Caco-2 (cell line): ENCODE measurements at regions of chr11 and their contacts with region 1.

Region 1: GRCh38 chr11:64846998-64847666 is 2.7 kb upstream of the CDC42BPG start:
- DNase-seq: peak; percentile 96 to 98
- H3K4me3 ChIP-seq: no peak overlapping the region
- H3K4me3 Mint-ChIP-seq: no peak overlapping the region
- H3K27ac Mint-ChIP-seq: no peak overlapping the region
- H3K4me1 ChIP-seq: peaks cover 34% of the 10 kb centered on the region
- H3K4me1 Mint-ChIP-seq: peaks cover 31% of the 10 kb centered on the region
- H3K27me3 ChIP-seq: no peaks in the 10 kb centered on the region
- H3K27me3 Mint-ChIP-seq: no peaks in the 10 kb centered on the region
- CTCF ChIP-seq: peak; percentile 95 to 99

Region 2: DNA sequence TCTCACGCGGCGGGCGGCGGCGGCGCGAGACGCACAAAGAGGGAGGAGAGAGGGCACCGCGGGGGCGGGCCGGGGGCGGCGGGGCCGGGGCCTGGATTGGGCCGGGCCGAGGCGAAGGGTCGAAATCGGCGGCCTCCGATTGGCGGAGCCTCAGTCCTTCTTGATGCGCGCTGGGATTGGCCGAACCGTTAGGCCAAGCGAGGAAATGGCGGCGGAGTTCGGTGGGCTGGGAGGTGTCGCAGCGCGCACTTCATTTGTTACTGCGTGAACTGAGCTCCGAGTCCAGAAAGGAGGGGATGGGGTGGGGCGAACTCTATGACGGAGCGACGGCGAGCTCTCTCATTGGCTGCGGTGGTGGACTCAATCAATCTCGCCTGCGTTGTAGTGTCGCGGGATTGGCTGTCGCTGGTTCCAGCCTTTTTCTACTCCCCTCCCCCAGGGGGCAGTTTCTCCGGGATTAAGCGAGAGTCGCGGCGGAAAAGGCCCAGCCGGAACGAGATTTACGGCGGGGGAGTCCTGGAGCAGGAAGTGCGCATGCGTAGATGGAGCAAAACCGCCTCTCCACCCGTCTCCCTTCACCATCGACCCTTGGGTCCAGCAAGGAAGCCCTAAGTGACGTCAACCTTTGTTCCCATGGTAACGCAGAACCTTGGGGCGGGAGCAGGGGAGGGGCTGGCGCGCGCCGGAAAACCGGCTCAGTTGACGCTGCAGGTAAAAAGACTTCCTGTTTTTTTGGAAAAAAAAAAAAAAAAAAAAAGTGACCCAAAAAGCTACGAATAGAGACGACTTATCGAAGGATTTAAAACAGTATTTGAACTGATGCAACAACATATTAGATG is 68.4 kb before region 1 on chr11 and contains the start of gene SF1:
- CTCF ChIA-PET with region 1: interaction called, 5 read pairs
- POLR2A ChIA-PET with region 1: interaction called, 13 read pairs
- intact Hi-C with region 1: loop called (anchors 5 kb)
- DNase-seq: peak; percentile 100
- H3K4me3 ChIP-seq: peak within 1 kb of the TSS; percentile 99
- H3K4me3 Mint-ChIP-seq: peak within 1 kb of the TSS; percentile 91
- H3K27ac Mint-ChIP-seq: peak within 1 kb of the TSS; percentile 99
- H3K4me1 ChIP-seq: peaks cover 17% of the 10 kb centered on the region
- H3K4me1 Mint-ChIP-seq: peaks cover 7% of the 10 kb centered on the region
- H3K27me3 ChIP-seq: no peaks in the 10 kb centered on the region
- H3K27me3 Mint-ChIP-seq: no peaks in the 10 kb centered on the region
- CTCF ChIP-seq: no peak
- total RNA-seq, gene SF1: 359 and 386 TPM in 2 replicates

Region 3: DNA sequence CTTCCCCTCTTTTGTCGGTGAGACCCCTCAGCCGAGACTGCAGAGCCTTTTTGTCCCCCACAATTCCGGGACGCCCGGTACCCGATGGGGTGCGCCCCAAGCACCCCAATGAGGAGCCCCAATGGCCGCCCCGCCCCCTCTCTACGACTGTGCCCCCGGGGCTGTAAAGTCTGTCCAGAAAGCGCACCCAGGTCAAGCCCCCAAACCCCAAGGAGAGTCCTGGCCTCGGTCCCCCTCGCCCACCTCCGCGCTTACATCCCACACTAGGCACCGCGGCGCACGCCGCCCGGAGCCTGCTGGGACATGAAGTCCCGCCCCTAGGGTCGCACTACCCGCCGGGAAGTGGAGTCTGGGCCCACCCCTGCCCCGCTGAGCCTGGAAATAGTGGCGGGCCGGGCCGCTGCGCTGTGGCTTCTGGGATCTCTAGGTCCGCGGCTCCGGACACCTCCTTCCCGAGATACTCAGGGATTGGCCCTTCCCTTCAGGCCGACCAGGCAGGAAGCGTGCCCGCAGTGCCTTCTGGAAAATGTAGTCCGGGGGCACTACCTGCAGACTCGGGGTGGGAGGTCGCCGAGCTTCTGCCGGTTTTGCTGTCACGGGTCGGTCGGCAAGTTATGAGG is 36.8 kb before region 1 on chr11 and contains the start of gene MEN1:
- CTCF ChIA-PET with region 1: interaction called, 7 read pairs
- POLR2A ChIA-PET with region 1: interaction called, 3 read pairs
- intact Hi-C with region 1: loop called (anchors 1 kb)
- DNase-seq: peak; percentile 98 to 99
- H3K4me3 ChIP-seq: peak within 1 kb of the TSS; percentile 90
- H3K4me3 Mint-ChIP-seq: peak within 1 kb of the TSS; percentile 85
- H3K27ac Mint-ChIP-seq: peak within 1 kb of the TSS; percentile 34
- H3K4me1 ChIP-seq: peaks cover 2% of the 10 kb centered on the region
- H3K4me1 Mint-ChIP-seq: peaks cover 2% of the 10 kb centered on the region
- H3K27me3 ChIP-seq: no peaks in the 10 kb centered on the region
- H3K27me3 Mint-ChIP-seq: no peaks in the 10 kb centered on the region
- CTCF ChIP-seq: no peak
- total RNA-seq, gene MEN1: 32.7 and 36.8 TPM in 2 replicates

Region 4: GRCh38 chr11:64887757-64888405 is 40.7 kb after region 1 on chr11:
- CTCF ChIA-PET with region 1: interaction called, 51 read pairs
- POLR2A ChIA-PET with region 1: no interaction called
- intact Hi-C with region 1: loop called (anchors 1 kb)
- DNase-seq: peak; percentile 85 to 87
- H3K4me3 ChIP-seq: no peak overlapping the region
- H3K4me3 Mint-ChIP-seq: peak overlapping the region; percentile 62
- H3K27ac Mint-ChIP-seq: peak overlapping the region; percentile 82
- H3K4me1 ChIP-seq: peaks cover 78% of the 10 kb centered on the region
- H3K4me1 Mint-ChIP-seq: peaks cover 55% of the 10 kb centered on the region
- H3K27me3 ChIP-seq: no peaks in the 10 kb centered on the region
- H3K27me3 Mint-ChIP-seq: no peaks in the 10 kb centered on the region
- CTCF ChIP-seq: peak; percentile 94 to 95

Region 5: GRCh38 chr11:64916775-64917662 is 69.9 kb after region 1 on chr11 and contains the start of gene ATG2A:
- CTCF ChIA-PET with region 1: interaction called, 5 read pairs
- POLR2A ChIA-PET with region 1: no interaction called
- intact Hi-C with region 1: loop called (anchors 1 kb)
- DNase-seq: peak; percentile 99
- H3K4me3 ChIP-seq: peak within 1 kb of the TSS; percentile 93
- H3K4me3 Mint-ChIP-seq: peak within 1 kb of the TSS; percentile 91
- H3K27ac Mint-ChIP-seq: peak within 1 kb of the TSS; percentile 74
- H3K4me1 ChIP-seq: peaks cover 6% of the 10 kb centered on the region
- H3K4me1 Mint-ChIP-seq: no peaks in the 10 kb centered on the region
- H3K27me3 ChIP-seq: no peaks in the 10 kb centered on the region
- H3K27me3 Mint-ChIP-seq: no peaks in the 10 kb centered on the region
- CTCF ChIP-seq: no peak
- total RNA-seq, gene ATG2A: 27.9 and 31.1 TPM in 2 replicates

Region 6: DNA sequence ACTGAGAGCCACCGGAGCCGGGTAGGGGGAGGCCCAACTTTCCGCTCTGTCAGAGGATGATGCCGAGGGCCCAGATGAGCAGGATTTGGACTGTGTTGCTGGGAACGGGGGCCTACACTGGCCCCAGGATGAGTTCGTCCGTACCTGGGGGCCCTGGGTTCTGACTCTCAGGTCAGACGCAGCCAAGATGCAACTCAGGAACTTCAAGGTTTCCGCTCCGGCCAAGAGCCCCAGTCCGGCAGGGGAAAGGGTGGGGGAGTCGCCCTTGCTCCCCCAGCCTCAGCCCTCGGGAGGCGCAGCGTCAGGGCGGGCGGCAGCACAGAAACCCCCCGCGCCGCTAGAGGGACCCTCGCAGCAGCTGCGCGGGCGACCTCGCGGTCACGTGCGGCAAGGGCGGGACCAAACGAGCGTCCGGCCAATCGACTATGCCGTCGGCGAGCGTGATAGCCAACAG is 166.6 kb after region 1 on chr11:
- CTCF ChIA-PET with region 1: interaction called, 5 read pairs
- POLR2A ChIA-PET with region 1: interaction called, 5 read pairs
- intact Hi-C with region 1: loop called (anchors 1 kb)
- DNase-seq: peak in 1 of 2 experiments; percentile 96
- H3K4me3 ChIP-seq: peak overlapping the region; percentile 62
- H3K4me3 Mint-ChIP-seq: peak overlapping the region; percentile 83
- H3K27ac Mint-ChIP-seq: peak overlapping the region; percentile 90
- H3K4me1 ChIP-seq: peaks cover 16% of the 10 kb centered on the region
- H3K4me1 Mint-ChIP-seq: peaks cover 22% of the 10 kb centered on the region
- H3K27me3 ChIP-seq: no peaks in the 10 kb centered on the region
- H3K27me3 Mint-ChIP-seq: no peaks in the 10 kb centered on the region
- CTCF ChIP-seq: peak in 1 of 2 experiments; percentile 71